GM18951 (cell line): ENCODE measurements at regions of chr6 and their contacts with region 1.

Region 1: DNA sequence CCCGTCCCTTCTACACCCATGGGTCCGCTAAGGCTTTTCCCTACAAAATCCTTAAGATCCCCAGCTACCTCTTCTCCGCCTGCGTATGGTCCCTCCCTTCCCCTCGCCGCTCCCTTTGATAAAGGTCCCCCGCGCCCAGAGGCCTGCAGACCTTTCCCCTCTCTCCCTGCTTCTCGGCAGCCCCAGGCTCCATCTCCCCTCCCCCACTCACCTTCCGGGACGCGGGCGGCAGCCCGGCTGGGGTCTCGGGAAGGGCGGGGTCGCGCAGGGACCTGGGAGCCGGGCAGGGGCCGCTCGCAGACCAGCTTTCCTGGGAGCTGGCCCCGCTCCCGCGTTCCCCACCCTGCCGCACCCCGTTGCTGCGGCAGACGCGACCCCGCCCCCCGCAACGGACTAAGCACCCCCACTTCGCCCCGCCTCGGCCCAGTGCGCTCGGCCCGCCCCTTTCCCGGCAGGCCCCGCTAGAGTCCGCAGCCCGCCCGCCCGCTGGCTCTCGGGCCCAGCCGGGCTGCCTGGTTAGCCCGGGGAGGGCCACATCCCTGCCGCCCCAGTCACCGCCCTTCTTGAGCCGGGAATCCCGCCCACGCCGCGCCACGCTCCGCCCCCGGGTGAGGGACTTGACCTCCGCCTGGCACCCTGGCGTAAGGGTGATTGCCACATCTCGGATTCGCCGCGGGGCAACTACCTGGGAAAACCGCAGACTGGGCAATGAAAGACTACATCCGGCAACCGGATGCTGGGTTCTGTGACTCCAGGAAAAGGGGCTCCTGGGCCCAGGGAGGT is at the start of gene FLOT1:
- POLR2A ChIP-seq: peak; percentile 73

Region 2: DNA sequence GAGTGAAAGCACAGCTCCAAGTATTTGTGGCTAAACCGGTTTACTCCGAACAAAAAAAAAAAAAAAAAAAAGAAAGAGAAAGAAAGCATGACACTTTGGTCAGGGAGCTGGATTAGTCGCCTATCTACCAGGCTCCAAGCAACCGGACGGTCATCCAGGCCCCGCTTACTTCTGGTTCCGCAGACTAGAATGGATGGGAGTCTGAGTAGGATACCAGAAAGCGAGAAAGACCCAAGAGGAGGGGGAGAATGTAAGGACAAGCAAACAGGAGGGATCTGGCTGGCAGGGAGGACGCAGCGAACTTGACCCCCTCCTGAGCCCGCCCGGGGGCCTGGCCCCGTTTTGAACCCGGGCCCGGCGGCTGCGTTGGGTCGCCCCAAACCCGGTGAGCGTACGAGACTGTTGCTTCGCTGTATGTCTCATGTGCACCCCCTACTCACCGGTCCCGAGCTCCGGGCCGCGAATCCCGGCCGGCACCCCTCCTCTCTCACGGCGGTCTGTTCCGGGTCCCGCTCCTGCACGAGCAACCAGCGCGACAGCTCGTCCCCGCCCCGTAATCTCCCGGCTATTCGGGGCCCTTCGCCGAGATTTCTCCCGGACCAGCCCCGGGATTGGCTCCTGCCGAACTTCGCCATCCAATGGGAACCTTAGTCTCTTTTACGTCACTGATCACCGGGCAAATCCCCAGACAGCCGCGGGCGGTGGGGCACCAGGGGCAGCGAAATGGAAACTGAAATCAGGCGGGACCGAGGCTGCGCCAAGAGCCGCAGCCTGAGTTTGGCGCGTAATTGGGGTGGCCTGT is 529.4 kb before region 1 on chr6 and contains the start of gene TRIM26:
- in situ Hi-C with region 1: no loop called
- POLR2A ChIP-seq: peak; percentile 92

Region 3: DNA sequence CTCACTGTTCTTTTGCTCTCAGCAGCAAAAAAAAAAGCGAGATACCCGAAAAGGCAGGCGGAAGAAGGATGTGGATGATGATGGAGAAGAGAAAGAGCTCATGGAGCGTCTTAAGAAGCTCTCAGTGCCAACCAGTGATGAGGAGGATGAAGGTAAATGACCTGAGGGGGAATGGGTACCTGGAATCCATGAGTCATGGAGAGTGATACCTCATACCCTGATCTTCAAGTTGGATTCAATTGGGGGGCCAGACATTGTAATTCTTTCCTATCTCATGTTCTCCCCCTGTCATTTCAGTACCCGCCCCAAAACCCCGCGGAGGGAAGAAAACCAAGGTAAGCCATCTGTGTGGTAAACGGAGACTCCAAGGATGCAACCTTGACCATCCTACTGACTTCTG is 164.5 kb before region 1 on chr6:
- in situ Hi-C with region 1: no loop called
- POLR2A ChIP-seq: no peak

Region 4: GRCh38 chr6:30814136-30815040 is 71.9 kb after region 1 on chr6:
- in situ Hi-C with region 1: loop called (anchors 10 kb)
- POLR2A ChIP-seq: no peak